Transverse colon (tissue), 4 donors: ENCODE measurements at regions of chr13 and their contacts with region 1.

Region 1: GRCh38 chr13:33710924-33711323 is 107.0 kb upstream of the RFC3 start:
- DNase-seq: no peak
- H3K4me3 ChIP-seq: no peak overlapping the region
- H3K27ac ChIP-seq: no peak overlapping the region
- H3K4me1 ChIP-seq: no peaks in the 10 kb centered on the region
- H3K27me3 ChIP-seq: no peaks in the 10 kb centered on the region
- CTCF ChIP-seq: no peak
- EP300 ChIP-seq: no peak
- POLR2A ChIP-seq: no peak

Region 2: DNA sequence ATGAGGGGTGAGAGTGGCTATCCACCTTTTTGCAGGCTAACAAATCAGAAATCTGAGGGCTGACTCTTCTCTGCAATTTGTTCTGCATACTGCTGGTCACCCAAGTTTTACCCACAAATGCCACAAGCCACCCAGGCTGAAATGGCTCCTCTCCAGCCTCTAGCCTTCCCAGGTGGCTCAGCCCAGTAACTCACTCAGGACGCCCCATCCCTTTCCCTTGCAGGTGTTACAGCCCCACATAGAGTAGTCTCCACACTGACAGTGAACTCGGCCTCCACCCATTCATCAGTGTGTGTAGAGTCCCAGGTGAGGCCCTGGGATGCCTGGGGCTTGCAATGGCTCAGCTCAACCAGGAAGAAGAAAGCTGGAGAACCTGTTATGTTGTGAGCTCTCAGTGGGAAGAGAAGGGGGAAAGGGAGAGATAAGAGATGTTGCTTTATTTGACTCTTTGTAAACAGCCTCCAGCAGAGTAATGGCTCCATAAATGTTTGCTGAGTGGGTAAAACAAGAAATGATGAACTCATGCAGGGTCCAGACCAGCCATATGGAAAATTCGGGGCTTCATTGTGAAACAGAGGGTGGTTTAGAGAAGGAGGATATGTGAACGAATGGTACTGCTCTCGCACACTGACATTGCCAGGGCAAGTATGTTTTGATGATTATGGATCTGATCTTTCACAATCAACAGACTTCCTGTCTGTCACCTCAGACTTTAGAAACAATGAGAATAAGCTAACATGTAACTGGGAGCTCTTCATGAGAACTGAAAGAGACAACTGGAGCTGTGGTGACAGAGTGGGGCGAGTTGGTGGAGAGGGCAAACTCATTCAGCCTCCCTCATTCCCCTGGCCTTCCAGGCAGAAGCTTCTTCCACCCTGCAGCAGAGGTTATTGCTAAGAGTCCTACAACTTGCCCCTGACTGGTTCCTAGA is 32.8 kb after region 1 on chr13:
- in situ Hi-C with region 1: no loop called
- intact Hi-C with region 1: loop called (anchors 1 kb)
- DNase-seq: no peak
- H3K4me3 ChIP-seq: no peak overlapping the region
- H3K27ac ChIP-seq: no peak overlapping the region
- H3K4me1 ChIP-seq: peaks cover 0 to 8% (median 2%) of the 10 kb centered on the region in 4 donors
- H3K27me3 ChIP-seq: no peaks in the 10 kb centered on the region
- CTCF ChIP-seq: no peak
- EP300 ChIP-seq: no peak
- POLR2A ChIP-seq: no peak